ENCODE measurements at regions of chr18 and their contacts with region 1.

Region 1: GRCh38 chr18:61551586-61551985 is 218.4 kb downstream of the CDH20 start:
- DNase-seq: peak; percentile 78
- H3K4me3 Mint-ChIP-seq: no peak overlapping the region
- H3K27ac Mint-ChIP-seq: no peak overlapping the region
- H3K4me1 Mint-ChIP-seq: no peaks in the 10 kb centered on the region
- H3K27me3 Mint-ChIP-seq: no peaks in the 10 kb centered on the region
- CTCF ChIP-seq: peak; percentile 81

Region 2: DNA sequence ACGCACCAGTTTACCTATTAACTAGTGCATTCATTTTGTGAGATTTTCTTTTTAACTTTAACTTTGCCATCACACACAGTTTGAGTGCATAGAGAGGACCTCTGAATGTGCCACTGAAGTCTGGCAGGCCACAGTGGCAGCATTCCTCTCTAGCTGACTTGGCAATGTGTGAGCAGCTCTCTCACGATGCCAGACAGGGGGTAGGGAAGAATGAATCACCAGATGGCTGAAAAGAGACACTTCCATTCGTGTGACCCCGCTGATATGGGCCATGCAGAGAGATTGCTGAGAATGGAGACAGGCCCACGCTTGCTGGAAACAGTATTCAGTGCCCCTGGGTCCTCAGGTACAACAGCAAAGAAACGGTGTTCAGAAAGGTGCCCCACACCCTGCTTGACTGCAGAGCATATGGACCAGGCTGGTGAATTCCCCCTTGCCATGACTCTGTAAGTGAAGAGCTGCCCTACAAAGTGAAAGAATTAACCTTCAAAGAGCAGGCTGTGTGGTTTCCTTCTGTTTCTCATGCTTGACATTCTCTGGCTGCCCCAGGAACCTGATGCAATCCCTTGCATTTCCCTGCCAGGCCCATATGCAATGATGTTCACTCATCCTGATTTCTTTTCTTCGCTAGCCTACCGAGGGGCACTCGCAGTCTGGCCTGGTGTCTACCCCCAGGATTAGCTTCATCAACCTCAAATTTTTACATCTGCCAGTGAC is 17.7 kb after region 1 on chr18:
- CTCF ChIA-PET with region 1: interaction called, 15 read pairs
- POLR2A ChIA-PET with region 1: interaction called, 3 read pairs
- intact Hi-C with region 1: no loop called
- DNase-seq: peak; percentile 72
- H3K4me3 Mint-ChIP-seq: no peak overlapping the region
- H3K27ac Mint-ChIP-seq: no peak overlapping the region
- H3K4me1 Mint-ChIP-seq: peaks cover 12% of the 10 kb centered on the region
- H3K27me3 Mint-ChIP-seq: no peaks in the 10 kb centered on the region
- CTCF ChIP-seq: no peak

Region 3: DNA sequence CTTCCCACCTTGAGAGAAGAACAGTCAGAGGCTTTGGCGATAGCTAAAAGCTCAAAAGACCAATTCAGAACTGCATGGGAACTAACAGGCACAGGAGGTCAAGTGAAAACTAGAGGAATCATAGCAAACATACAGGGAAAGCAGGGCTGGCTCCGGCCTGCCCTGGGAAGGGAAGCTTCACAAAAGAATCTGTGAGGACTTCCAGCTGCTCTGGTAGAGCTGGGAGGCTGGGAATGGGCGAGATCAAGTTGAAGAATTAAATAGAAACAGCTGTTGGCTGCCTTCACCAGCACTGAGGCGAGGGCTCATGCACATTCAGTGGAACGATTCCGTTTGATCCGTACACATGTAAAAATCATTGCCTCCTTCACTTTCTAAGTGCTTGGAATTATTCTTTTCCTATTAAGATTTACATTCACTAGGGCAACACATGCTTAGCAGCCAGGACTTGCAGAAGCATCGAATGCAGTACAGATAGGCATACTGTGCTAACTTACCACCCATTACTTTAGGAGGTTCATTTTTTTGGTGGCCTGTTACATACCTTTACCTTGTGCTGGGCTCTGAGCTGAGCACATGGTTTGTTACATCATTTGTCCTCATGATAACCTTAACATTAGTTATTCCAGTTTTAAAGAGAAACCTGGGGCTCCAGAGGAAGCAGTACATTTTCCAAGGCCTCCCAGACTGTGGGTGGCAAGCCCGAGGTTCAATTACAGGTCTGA is 466.6 kb after region 1 on chr18:
- CTCF ChIA-PET with region 1: no interaction called
- POLR2A ChIA-PET with region 1: no interaction called
- intact Hi-C with region 1: no loop called
- DNase-seq: no peak
- H3K4me3 Mint-ChIP-seq: no peak overlapping the region
- H3K27ac Mint-ChIP-seq: no peak overlapping the region
- H3K4me1 Mint-ChIP-seq: no peaks in the 10 kb centered on the region
- H3K27me3 Mint-ChIP-seq: no peaks in the 10 kb centered on the region
- CTCF ChIP-seq: no peak

Measured in MCF 10A (cell line).